Activated CD4-positive, alpha-beta memory T cell treated with anti-CD3 and anti-CD28 coated beads, Interleukin-2, amount 10 ng/mL, durations not matched to agents 7 days and 5 days (primary cell): ENCODE measurements at regions of chr19 and their contacts with region 1.

Region 1: DNA sequence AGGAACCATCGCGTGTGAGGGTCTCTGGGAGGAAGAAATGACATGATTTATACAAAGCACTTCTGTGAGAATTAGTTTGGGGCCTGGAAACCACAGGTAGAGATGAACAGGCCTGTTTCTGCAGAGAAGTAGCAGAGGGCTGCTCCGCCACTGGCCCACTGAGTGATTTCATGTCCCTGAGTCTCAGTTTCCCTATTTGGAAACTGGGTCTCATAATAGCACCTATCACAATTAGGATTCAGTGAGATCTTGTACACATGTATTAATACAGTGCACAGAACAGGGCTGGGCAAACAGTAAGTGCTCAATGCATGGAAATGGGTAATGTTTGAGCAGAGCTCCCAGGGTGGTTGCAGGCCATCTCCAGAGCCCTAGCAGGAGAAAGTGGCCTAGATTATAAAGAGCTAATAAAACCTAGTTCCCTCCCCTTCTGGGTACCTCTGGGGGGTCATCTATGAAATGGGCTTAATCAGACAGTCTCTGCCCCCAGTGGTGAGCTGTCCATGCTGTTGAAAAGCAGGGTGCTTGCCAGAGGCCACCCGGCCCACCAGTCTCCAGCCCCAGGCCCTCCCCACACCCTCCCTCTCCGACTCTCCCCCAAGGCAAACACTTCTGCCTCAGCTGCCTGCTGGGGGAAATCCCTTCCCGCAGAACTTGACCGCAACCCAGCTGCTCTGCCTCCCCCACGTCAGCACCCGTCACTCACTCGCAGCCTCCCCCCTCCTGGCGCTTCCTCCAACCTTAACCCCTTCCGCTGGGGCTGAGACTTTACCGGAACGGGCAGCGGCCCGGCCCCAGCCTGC is 4.5 kb downstream of the BCL3 start:
- DNase-seq: peak; percentile 98
- H3K4me3 Mint-ChIP-seq: peak overlapping the region; percentile 87
- H3K27ac Mint-ChIP-seq: peak overlapping the region; percentile 97
- H3K4me1 Mint-ChIP-seq: peaks cover 70% of the 10 kb centered on the region
- H3K27me3 Mint-ChIP-seq: no peaks in the 10 kb centered on the region

Region 2: GRCh38 chr19:44689056-44689895 is 63.7 kb before region 1 on chr19:
- CTCF ChIA-PET with region 1: interaction called, 6 read pairs
- POLR2A ChIA-PET with region 1: interaction called, 12 read pairs
- DNase-seq: peak; percentile 77
- H3K4me3 Mint-ChIP-seq: no peak overlapping the region
- H3K27ac Mint-ChIP-seq: no peak overlapping the region
- H3K4me1 Mint-ChIP-seq: peaks cover 38% of the 10 kb centered on the region
- H3K27me3 Mint-ChIP-seq: peaks cover 29% of the 10 kb centered on the region

Region 3: DNA sequence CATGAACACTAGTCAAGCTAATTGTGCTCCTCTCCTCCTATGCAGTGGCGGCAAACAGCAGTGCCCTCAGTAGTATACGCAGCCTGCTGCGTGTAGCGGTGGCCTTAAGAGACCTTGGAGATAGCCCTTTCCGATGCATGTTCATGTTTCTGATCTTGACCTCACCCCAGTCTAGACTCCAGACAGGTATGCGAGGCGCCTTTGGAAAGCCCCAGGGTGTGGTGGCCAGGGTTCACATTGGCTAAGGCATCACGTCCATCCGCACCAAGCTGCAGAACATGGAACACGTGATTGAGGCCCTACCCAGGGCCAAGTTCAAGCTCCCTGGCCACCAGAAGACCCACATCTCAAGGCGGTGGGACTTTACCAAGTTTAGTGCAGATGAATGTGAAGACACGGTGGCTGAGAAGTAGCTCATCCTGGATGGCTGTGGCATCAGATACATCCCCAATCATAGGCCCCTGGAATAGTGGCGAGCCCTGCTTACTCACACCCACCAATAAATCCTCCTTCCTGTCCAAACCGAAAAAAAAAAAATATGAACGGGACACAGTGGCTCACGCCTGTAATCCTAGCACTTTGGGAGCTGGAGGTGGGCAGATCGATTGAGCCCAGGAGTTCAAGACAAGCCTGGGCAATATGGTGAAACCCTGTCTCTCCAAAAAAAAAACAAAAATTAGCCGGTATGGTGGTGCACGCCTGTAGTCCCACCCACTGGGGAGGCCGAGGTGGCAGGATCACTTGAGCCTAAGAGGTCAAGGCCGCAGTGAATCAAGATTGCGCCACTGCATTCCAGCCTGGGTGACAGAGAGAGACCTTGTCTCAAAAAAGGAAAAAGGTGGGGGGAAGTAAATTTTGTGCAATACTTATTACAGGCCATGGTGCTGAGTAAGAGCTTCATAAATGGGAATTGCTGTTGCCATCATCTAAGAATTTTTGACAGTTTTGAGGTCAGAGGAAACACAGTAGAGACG is 12.2 kb after region 1 on chr19:
- CTCF ChIA-PET with region 1: interaction called, 25 read pairs
- POLR2A ChIA-PET with region 1: interaction called, 37 read pairs
- DNase-seq: no peak
- H3K4me3 Mint-ChIP-seq: no peak overlapping the region
- H3K27ac Mint-ChIP-seq: no peak overlapping the region
- H3K4me1 Mint-ChIP-seq: peaks cover 61% of the 10 kb centered on the region
- H3K27me3 Mint-ChIP-seq: peaks cover 2% of the 10 kb centered on the region